PC-3 (cell line): ENCODE measurements at regions of chr5 and their contacts with region 1.

Region 1: DNA sequence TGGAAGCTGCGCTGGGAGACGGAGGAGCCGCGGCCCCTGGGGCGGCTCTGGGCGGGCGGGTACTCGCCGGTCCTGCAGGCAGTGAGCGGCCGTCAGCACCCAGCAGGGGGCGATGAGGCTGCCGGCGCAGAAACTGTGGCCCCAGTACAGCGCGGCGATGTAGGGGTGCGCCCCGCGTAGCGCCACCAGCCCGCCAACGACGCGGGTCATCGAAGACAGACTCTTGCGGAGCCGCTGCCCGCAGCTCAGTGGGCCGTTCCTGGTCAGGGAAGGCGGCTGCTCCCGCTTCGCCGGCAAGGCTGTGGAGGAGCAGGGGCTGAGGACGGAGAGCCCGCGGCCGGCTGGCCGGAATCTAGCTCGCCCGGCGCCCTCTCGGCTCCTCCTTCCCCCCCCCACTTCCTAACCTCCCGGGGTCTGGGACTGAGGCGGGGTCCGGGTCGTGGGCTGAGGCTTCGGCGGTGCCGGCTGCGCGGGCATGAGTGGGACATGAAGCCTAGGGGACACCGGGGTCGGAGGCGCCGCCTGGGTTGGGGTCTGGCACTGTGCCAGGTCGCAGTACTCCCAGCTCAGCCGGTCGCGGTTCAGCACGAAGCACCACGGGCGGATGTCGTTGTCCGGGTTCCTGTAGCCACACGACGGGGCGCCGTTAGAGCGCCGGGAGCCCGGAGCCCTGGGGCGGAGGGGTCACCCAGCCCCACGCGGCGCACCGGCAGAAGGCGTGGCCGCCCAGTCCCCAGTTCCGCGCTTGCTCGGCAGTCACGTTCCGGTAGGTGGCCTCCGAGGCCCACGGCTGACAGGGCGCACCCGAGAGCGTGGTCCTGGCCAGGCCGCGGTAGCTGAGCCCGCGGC is 3.6 kb upstream of the PFN3 start:
- DNase-seq: peak; percentile 83
- ATAC-seq: peak; percentile 71
- H3K4me3 ChIP-seq: peak overlapping the region; percentile 80
- H3K27ac ChIP-seq: 0 out of 2 replicates have a peak overlapping the region, but pooled peaks have one; percentile 14
- H3K4me1 ChIP-seq: peaks cover 13% of the 10 kb centered on the region
- H3K27me3 ChIP-seq: no peaks in the 10 kb centered on the region
- CTCF ChIP-seq: peak; percentile 66

Region 2: GRCh38 chr5:177113566-177114424 is 290.2 kb before region 1 on chr5:
- CTCF ChIA-PET with region 1: no interaction called
- POLR2A ChIA-PET with region 1: no interaction called
- intact Hi-C with region 1: loop called (anchors 1 kb)
- DNase-seq: peak; percentile 89
- ATAC-seq: peak; percentile 77
- H3K4me3 ChIP-seq: no peak overlapping the region
- H3K27ac ChIP-seq: no peak overlapping the region
- H3K4me1 ChIP-seq: no peaks in the 10 kb centered on the region
- H3K27me3 ChIP-seq: no peaks in the 10 kb centered on the region
- CTCF ChIP-seq: peak; percentile 98

Region 3: GRCh38 chr5:177370488-177371119 is 33.4 kb before region 1 on chr5:
- CTCF ChIA-PET with region 1: interaction called, 13 read pairs
- POLR2A ChIA-PET with region 1: interaction called, 3 read pairs
- intact Hi-C with region 1: no loop called
- DNase-seq: peak; percentile 94
- ATAC-seq: peak; percentile 92
- H3K4me3 ChIP-seq: peak overlapping the region; percentile 74
- H3K27ac ChIP-seq: no peak overlapping the region
- H3K4me1 ChIP-seq: peaks cover 6% of the 10 kb centered on the region
- H3K27me3 ChIP-seq: no peaks in the 10 kb centered on the region
- CTCF ChIP-seq: peak; percentile 57

Region 4: DNA sequence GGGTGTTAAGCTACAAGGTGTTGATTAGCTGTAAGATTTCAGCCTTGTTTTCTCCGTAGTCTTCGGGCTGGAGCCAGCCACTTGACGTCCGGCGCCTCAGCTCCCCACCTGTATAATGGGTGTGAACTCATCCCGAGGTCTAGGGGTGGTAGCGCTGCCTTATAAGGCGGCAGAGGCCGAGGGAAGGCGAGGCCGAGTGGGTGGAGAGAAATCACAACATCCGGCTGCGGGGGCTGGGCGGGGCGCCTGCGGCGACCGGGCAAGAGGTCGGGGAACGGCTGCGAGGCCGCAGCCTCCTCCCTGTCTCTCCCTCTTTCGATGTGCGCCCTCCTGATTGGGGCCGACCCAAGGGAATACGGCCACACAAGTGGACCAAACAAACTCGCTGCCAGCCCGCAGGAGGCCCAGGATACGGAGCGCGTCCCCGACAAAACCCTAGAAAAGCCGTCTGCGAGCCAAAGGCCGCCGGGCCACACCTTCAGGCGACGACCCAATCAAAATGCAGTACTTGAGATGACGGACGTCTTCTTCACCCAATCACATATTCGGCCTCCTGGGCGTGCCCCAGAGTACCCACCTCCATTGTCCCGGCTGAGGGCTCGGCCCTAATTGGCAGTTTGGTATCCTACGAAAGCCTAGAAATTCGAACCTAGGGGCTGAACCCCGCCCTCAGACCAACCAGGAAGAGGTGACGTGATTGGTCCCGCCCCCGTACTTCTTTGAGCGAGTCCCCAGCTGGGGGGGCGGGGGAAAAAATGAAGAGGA is 22.0 kb after region 1 on chr5:
- CTCF ChIA-PET with region 1: interaction called, 32 read pairs
- POLR2A ChIA-PET with region 1: interaction called, 6 read pairs
- intact Hi-C with region 1: loop called (anchors 2 kb)
- DNase-seq: peak; percentile 100
- ATAC-seq: peak; percentile 91
- H3K4me3 ChIP-seq: peak overlapping the region; percentile 72
- H3K27ac ChIP-seq: peak overlapping the region; percentile 72
- H3K4me1 ChIP-seq: peaks cover 19% of the 10 kb centered on the region
- H3K27me3 ChIP-seq: no peaks in the 10 kb centered on the region
- CTCF ChIP-seq: no peak

Region 5: GRCh38 chr5:177454397-177455035 is 50.5 kb after region 1 on chr5:
- CTCF ChIA-PET with region 1: interaction called, 36 read pairs
- POLR2A ChIA-PET with region 1: interaction called, 4 read pairs
- intact Hi-C with region 1: loop called (anchors 1 kb)
- DNase-seq: peak; percentile 94
- ATAC-seq: peak; percentile 48
- H3K4me3 ChIP-seq: peak overlapping the region; percentile 88
- H3K27ac ChIP-seq: peak overlapping the region; percentile 60
- H3K4me1 ChIP-seq: peaks cover 16% of the 10 kb centered on the region; the same call in 1 of the 2 replicates
- H3K27me3 ChIP-seq: no peaks in the 10 kb centered on the region
- CTCF ChIP-seq: peak; percentile 83